ENCODE measurements at regions of chr1 and their contacts with region 1.

Region 1: GRCh38 chr1:109886827-109887226 is 23.8 kb upstream of the CSF1 start:
- DNase-seq: no peak
- H3K4me3 ChIP-seq: no peak overlapping the region
- H3K27ac ChIP-seq: no peak overlapping the region
- H3K4me1 ChIP-seq: peaks cover under 1% of the 10 kb centered on the region
- H3K27me3 ChIP-seq: no peaks in the 10 kb centered on the region
- CTCF ChIP-seq: no peak

Region 2: DNA sequence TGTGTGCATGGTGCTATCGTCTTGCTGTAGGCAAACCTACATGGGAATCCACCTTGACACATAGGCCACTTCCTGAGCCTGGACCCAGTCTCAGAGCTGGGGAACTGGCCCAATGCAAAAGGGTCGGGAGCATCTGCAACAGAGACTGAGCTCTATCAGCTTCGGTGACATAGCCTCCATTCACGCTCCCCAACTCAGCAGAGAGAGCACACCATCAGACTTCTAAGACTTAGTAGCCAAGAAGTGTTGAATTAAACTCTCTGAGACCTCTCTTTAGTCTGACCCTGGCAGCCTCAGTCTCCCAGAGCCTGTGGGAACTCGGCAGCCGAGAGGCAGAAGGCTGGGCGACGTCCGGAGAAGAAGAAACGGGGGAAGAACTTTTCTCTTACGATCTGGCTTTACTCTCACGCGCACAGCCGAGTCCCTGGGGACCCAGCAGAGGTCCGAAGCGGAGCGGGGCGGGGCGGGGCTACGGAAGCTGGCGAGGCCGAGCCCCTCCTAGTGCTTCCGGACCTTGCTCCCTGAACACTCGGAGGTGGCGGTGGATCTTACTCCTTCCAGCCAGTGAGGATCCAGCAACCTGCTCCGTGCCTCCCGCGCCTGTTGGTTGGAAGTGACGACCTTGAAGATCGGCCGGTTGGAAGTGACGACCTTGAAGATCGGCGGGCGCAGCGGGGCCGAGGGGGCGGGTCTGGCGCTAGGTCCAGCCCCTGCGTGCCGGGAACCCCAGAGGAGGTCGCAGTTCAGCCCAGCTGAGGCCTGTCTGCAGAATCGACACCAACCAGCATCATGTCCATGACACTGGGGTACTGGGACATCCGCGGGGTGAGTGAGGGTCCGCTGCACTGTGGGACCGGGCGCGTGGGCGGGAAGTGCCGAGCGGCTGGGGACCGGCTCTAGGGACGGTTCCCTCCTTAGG is 231.0 kb before region 1 on chr1 and contains the start of gene GSTM4:
- CTCF ChIA-PET with region 1: no interaction called
- dilution Hi-C with region 1: no loop called
- in situ Hi-C with region 1: loop called in 1 of 2 experiments (anchors 10 kb)
- intact Hi-C with region 1: no loop called
- DNase-seq: peak; percentile 38
- H3K4me3 ChIP-seq: peak within 1 kb of the TSS; percentile 64 to 70 (median 68)
- H3K27ac ChIP-seq: no peak within 1 kb of the TSS
- H3K4me1 ChIP-seq: peaks cover 9% of the 10 kb centered on the region
- H3K27me3 ChIP-seq: peaks cover 5% of the 10 kb centered on the region
- CTCF ChIP-seq: peak in 1 of 2 donors; percentile 19
- total RNA-seq, gene GSTM4: 5.0 to 5.8 TPM

Region 3: DNA sequence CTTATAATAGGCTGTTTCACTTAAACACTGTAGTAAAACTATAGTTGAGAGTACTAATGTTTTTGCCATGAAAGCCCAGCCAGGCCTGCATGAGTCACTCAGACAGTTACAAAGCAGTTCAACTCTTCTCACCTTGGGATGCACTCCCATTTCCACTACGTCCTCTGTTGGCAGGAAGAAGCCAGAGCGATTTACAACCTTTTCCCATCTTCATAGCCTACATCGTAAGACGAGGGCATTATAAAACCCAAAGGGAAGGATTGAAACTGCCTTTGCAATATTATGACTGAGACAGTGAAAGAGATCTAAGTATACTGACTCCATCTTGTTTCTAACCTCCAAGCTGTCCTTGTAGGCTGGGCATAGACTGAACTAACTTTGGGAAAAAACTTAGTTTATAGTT is 48.0 kb before region 1 on chr1:
- CTCF ChIA-PET with region 1: no interaction called
- dilution Hi-C with region 1: no loop called
- in situ Hi-C with region 1: no loop called
- intact Hi-C with region 1: no loop called
- DNase-seq: peak; percentile 57
- H3K4me3 ChIP-seq: no peak overlapping the region
- H3K27ac ChIP-seq: no peak overlapping the region
- H3K4me1 ChIP-seq: peaks cover 16% of the 10 kb centered on the region
- H3K27me3 ChIP-seq: no peaks in the 10 kb centered on the region
- CTCF ChIP-seq: peak; percentile 1 to 15

Region 4: GRCh38 chr1:109850194-109850593 is 36.6 kb before region 1 on chr1:
- CTCF ChIA-PET with region 1: no interaction called
- dilution Hi-C with region 1: loop called (anchors 5 kb)
- in situ Hi-C with region 1: no loop called
- intact Hi-C with region 1: no loop called
- DNase-seq: no peak
- H3K4me3 ChIP-seq: no peak overlapping the region
- H3K27ac ChIP-seq: no peak overlapping the region
- H3K4me1 ChIP-seq: peaks cover 13% of the 10 kb centered on the region
- H3K27me3 ChIP-seq: no peaks in the 10 kb centered on the region
- CTCF ChIP-seq: no peak

Region 5: DNA sequence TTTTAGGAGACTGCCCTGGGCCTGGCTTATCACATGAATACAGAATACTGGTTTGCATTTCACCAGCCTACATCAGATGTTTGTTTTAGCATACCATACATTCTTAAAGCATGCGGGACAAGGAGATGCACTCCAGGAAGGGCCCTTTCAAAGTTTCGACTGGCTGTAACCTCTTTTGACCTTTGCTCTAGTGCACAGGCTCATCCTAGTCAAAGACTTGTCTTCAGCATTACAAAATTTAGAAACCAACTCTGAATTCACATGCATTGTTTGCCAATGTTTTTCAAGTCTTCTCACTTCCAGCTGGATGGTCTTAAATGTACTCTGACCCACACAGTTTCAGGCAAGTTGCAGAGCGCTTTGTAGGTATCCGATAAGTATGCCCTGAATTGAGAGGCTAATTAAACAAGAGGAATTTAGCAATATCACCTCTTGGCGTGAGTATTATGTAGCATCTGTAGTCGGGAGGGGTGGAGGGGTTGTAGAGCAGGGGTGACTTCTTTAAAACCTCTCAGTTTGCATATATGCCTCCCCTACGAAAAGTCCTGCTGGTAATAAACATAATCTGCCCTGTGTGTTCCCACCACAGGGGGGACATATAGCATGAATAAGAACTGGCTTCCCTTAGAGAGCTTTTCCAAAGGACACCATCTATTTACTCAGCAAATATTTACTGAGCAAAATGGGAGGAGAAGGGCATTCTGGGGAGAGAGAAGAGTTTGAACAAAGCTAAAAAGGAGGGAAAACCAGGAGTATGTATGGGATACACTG is 73.3 kb after region 1 on chr1:
- CTCF ChIA-PET with region 1: no interaction called
- dilution Hi-C with region 1: loop called (anchors 5 kb)
- in situ Hi-C with region 1: no loop called
- intact Hi-C with region 1: no loop called
- DNase-seq: peak; percentile 14
- H3K4me3 ChIP-seq: no peak overlapping the region
- H3K27ac ChIP-seq: no peak overlapping the region
- H3K4me1 ChIP-seq: peaks cover 22% of the 10 kb centered on the region
- H3K27me3 ChIP-seq: no peaks in the 10 kb centered on the region
- CTCF ChIP-seq: no peak